ENCODE measurements at regions of chr3 and their contacts with region 1.

Region 1: GRCh38 chr3:46895204-46895660 is 17.7 kb downstream of the PTH1R start:
- DNase-seq: peak; percentile 75 to 88
- H3K4me3 ChIP-seq: no peak overlapping the region
- H3K4me3 Mint-ChIP-seq: no peak overlapping the region
- H3K27ac Mint-ChIP-seq: no peak overlapping the region
- H3K4me1 ChIP-seq: peaks cover 9% of the 10 kb centered on the region; the same call in 1 of the 2 replicates
- H3K4me1 Mint-ChIP-seq: peaks cover 7% of the 10 kb centered on the region
- H3K27me3 ChIP-seq: no peaks in the 10 kb centered on the region
- H3K27me3 Mint-ChIP-seq: no peaks in the 10 kb centered on the region
- CTCF ChIP-seq: peak; percentile 90 to 95

Region 2: GRCh38 chr3:46488735-46489361 is 406.4 kb before region 1 on chr3:
- CTCF ChIA-PET with region 1: interaction called, 3 read pairs
- POLR2A ChIA-PET with region 1: no interaction called
- intact Hi-C with region 1: loop called (anchors 10 kb)
- DNase-seq: peak; percentile 92 to 95
- H3K4me3 ChIP-seq: no peak overlapping the region
- H3K4me3 Mint-ChIP-seq: peak overlapping the region; percentile 63
- H3K27ac Mint-ChIP-seq: no peak overlapping the region
- H3K4me1 ChIP-seq: peaks cover 21% of the 10 kb centered on the region
- H3K4me1 Mint-ChIP-seq: peaks cover 12% of the 10 kb centered on the region
- H3K27me3 ChIP-seq: no peaks in the 10 kb centered on the region
- H3K27me3 Mint-ChIP-seq: no peaks in the 10 kb centered on the region
- CTCF ChIP-seq: peak; percentile 98 to 100

Region 3: DNA sequence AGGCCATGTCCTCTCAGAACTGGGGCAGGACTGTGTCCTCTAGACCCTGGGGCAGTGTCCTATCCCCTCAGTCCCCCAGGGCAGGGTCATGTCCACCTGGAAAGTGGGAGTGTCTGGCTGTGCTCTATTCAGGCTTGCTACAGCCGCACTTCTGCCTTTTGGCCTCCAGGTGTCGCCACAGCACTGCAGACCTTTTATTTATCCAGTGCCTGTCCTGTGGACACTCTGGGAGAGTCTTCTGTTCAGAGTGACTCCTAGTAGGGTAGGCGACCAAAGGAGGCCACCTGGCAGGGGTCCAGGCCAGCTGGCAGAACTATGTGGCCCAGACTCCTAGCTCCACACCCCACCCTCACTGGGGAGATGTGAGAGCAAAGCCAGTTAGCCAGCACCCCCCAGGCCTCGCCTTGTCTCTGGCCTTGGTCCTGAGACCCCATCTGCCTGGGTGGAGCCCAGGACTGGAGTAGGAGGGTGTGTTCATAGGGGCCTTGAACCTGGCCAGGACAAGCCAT is 190.2 kb before region 1 on chr3:
- CTCF ChIA-PET with region 1: interaction called, 19 read pairs
- POLR2A ChIA-PET with region 1: interaction called, 3 read pairs
- intact Hi-C with region 1: loop called (anchors 1 kb)
- DNase-seq: peak; percentile 78 to 79
- H3K4me3 ChIP-seq: no peak overlapping the region
- H3K4me3 Mint-ChIP-seq: no peak overlapping the region
- H3K27ac Mint-ChIP-seq: no peak overlapping the region
- H3K4me1 ChIP-seq: no peaks in the 10 kb centered on the region
- H3K4me1 Mint-ChIP-seq: no peaks in the 10 kb centered on the region
- H3K27me3 ChIP-seq: no peaks in the 10 kb centered on the region; the same call in 1 of the 2 replicates
- H3K27me3 Mint-ChIP-seq: peaks cover 6% of the 10 kb centered on the region
- CTCF ChIP-seq: peak; percentile 91 to 95

Region 4: DNA sequence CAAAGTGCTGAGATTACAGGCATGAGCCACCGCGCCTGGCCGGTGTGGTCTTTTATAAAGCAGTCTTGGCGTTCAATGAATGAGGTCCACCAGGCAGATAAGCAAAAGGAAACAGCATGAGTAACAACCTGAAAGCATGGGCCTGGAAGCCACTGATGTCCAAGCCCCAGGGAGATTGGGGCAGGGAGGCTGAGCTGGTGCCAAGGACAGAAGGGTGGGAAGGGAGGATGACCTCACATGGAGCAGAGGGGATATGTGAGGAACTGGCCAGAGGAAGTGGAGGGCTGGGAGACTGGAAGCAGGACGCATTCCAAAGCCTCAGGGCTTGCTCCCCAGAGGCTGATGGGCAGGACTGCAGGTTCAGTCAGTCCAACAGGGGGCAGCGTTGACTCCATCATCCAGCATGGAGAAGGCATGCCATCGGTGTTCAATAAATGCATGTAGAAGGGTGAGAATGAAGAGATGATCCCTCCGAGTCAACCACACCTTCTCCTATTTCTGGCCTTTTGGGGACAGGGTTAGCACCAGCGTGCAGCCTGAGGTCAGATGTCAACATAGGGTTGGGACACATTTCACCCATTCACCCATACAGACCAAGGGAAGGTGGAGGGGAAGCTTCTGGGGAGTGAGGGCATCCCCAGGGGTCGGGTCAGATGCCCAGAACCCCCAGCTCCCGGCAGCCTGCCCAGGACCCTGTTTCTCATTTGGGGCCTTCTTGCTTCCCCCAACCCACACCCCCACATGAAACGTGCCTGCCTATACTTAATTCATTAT is 46.8 kb before region 1 on chr3:
- CTCF ChIA-PET with region 1: interaction called, 14 read pairs
- POLR2A ChIA-PET with region 1: no interaction called
- intact Hi-C with region 1: no loop called
- DNase-seq: peak in 1 of 2 experiments; percentile 33
- H3K4me3 ChIP-seq: no peak overlapping the region
- H3K4me3 Mint-ChIP-seq: peak overlapping the region; percentile 21
- H3K27ac Mint-ChIP-seq: peak overlapping the region; percentile 70
- H3K4me1 ChIP-seq: peaks cover 21% of the 10 kb centered on the region
- H3K4me1 Mint-ChIP-seq: peaks cover 16% of the 10 kb centered on the region
- H3K27me3 ChIP-seq: no peaks in the 10 kb centered on the region
- H3K27me3 Mint-ChIP-seq: no peaks in the 10 kb centered on the region
- CTCF ChIP-seq: peak; percentile 31 to 42

Region 5: DNA sequence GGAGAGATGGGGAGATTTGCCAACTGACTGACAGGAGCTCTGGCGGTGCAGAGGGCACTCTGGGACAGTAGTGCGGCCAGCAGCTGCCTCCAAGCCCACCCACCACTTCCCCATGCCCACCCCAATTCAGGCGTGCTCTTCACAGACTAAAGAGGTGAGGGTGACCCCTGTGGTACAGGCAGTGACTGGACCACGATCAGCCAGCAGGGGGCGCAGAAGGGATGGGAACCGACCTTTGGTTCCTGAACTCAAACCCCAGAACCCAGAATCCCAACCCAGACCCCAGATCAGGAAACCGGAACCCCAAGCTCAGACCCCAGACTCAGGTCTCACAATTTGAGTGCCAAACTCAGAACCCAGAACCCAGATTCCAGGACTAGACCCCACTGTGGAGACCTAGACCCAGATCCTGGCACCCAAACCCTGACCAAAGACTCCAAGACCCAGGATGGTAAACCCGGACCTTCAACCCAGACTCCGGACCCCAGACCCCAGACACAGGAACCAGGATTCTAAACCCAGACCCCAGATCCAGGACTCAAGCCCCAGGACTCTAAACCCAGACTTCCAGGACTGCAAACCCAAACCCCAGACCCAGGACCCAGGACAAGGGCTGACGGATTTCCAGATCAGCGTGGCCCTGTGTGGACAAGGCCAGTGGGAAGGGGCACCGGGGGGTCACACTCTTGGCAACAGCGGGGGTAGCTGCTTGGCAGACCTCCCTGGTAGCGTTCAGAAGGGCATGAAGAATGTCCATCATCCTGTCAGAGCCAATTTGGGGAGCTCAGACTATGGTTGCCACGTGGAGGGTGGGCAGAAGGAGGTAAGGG is 28.3 kb before region 1 on chr3:
- CTCF ChIA-PET with region 1: interaction called, 12 read pairs
- POLR2A ChIA-PET with region 1: no interaction called
- intact Hi-C with region 1: loop called (anchors 1 kb)
- DNase-seq: peak; percentile 69 to 80
- H3K4me3 ChIP-seq: no peak overlapping the region
- H3K4me3 Mint-ChIP-seq: no peak overlapping the region
- H3K27ac Mint-ChIP-seq: no peak overlapping the region
- H3K4me1 ChIP-seq: peaks cover 33% of the 10 kb centered on the region
- H3K4me1 Mint-ChIP-seq: peaks cover 22% of the 10 kb centered on the region
- H3K27me3 ChIP-seq: no peaks in the 10 kb centered on the region
- H3K27me3 Mint-ChIP-seq: no peaks in the 10 kb centered on the region
- CTCF ChIP-seq: peak; percentile 80 to 94

Region 6: DNA sequence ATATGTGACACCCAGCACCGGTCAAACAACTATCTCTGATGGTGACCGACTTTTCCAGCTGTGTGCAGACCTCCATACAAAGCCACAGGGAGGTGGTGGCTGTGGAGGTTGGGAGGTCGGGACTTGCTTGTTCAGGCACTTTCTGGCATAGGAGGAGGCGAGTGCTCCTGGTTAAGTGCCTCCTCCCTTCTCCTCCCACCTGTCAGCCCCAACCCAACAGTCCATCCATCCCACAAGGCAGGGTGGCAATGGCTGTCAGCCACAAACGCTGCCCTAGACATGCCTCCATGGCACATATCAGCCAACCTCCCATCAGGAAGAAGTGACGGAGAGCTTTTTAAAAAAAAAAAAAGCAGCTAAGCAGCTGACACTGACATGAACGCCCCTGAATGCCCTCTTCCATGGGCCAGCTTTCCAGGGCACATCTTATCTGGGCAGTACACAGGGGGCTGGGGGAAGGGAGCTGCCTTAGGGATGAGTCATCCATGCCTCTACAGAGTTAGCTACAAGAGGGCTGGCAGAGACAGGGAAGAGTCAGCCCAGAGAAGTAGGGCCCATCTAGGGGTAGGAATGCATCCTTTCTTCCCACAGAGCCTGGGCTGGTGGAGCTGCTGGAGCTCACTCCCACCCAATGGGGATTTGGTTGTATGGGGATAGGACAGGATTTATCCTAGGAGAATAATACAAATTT is 40.1 kb after region 1 on chr3:
- CTCF ChIA-PET with region 1: no interaction called
- POLR2A ChIA-PET with region 1: no interaction called
- intact Hi-C with region 1: no loop called
- DNase-seq: peak; percentile 84 to 90
- H3K4me3 ChIP-seq: no peak overlapping the region
- H3K4me3 Mint-ChIP-seq: peak overlapping the region; percentile 24
- H3K27ac Mint-ChIP-seq: peak overlapping the region; percentile 69
- H3K4me1 ChIP-seq: peaks cover 82% of the 10 kb centered on the region
- H3K4me1 Mint-ChIP-seq: peaks cover 56% of the 10 kb centered on the region
- H3K27me3 ChIP-seq: no peaks in the 10 kb centered on the region
- H3K27me3 Mint-ChIP-seq: no peaks in the 10 kb centered on the region
- CTCF ChIP-seq: peak; percentile 35 to 70